ENCODE measurements at regions of chr6 and their contacts with region 1.

Region 1: DNA sequence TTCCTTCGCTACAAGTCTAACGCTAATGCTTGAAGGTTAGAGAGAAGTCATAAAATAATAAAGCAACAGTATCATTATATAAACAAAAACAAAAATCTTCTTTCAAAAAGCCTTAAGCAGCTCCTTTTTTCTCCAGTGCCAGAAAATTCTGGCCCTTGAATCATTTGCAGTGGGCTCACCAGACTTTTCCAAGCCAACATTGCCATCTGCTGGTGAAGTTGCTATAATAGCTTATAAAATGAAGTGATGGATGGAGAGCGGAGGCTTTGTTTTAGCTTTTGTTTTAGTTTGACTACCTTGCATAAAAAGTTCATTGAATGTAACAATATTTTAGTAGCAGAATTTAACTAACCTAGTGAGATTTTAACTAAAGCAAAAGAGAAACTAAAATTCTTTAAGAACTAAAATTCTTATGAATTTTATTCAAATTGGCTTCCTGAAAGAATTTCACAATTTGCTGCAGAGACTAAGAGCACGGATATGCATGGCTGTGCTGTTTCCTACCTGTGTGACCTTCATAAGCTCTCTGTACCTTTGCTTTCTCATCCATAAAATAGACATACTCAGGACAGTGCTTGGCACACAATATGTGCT is 44.8 kb upstream of the SLC2A12 start:
- DNase-seq: no peak
- H3K4me3 ChIP-seq: no peak overlapping the region
- H3K27ac ChIP-seq: no peak overlapping the region
- H3K4me1 ChIP-seq: no peaks in the 10 kb centered on the region
- H3K27me3 ChIP-seq: peaks cover 0 to 7% (median 0%) of the 10 kb centered on the region in 4 donors
- CTCF ChIP-seq: peak; percentile 54 to 75 (median 69)
- POLR2A ChIP-seq: no peak

Region 2: DNA sequence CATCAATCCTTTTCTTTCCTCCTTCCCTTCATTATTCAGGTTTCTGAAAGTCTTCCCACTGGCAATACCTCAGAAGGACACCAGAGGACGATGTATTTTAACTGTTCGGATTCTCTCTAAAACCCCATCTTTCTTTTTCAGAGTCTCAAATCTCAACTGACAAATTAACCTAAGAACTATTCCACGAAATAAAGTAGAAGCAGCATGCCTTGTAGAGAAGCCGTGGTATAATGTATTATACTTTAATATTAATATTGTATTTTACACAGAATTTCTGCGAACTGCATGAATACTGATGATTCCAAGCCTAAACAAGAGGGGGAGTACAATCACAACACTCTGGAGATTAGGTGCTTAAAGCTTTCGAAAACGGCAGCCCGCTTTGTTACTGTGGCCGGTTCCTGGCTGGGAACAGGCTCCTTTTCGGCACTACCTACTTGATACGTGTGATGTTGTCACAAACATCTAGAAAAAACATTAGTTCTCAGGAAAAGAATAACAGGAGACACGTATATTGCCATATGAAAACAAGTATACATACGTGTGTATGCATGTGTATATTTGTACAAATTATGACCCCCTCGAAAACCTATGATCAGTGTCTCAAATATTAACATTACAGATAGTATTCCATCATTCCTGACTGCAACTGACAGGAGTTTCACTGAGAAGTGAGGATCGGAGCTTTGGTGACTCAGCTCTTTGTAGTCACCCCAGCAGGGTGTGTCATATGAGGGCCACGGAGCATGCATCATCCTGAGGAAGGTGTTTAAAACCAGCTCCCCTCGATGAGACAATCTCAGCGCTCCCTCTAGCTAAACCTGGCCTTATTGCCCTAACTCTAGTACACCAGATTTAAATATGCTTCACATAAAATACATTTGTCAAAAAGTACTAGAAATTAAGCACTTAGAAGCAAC is 528.0 kb before region 1 on chr6:
- intact Hi-C with region 1: loop called (anchors 10 kb)
- DNase-seq: no peak
- H3K4me3 ChIP-seq: peak overlapping the region; percentile 17 to 61 (median 34)
- H3K27ac ChIP-seq: peak overlapping the region; percentile 38 to 64 (median 62)
- H3K4me1 ChIP-seq: peaks cover 0 to 15% (median 0%) of the 10 kb centered on the region in 3 donors
- H3K27me3 ChIP-seq: no peaks in the 10 kb centered on the region
- CTCF ChIP-seq: peak; percentile 36 to 95 (median 90)
- POLR2A ChIP-seq: no peak

Region 3: DNA sequence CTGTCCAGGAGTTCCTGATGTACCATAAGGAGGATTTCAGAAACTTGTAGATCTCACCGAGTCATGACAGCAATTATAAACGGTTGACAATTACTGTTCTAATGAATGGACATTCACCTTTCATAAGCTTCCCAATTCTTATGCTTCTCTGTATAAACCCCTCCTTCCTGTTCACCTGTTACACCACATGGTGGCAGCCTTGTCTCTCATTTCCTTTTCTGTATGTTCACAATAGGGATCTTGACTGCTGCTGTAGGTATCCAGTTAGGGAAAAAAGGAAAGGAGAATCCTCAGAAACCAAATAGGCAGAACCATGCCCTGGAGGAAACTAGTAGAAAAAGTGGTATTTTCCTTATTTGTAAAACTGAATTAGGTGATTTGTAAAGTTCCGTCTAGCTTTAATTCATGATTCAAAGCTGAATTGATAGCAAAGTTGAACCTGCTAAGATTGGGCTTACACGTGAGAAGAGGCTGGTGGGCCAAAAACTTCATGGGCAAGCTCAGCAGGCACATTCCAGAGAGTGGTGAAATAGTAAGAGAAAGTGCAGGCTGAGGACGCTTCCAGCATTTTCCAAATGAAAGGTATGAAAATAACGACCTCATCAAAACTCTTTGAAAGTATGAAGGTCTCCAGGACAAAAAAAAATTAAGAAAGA is 173.1 kb before region 1 on chr6:
- intact Hi-C with region 1: loop called (anchors 5 kb)
- DNase-seq: no peak
- H3K4me3 ChIP-seq: no peak overlapping the region
- H3K27ac ChIP-seq: no peak overlapping the region
- H3K4me1 ChIP-seq: peaks cover 0 to 8% (median 0%) of the 10 kb centered on the region in 3 donors
- H3K27me3 ChIP-seq: peaks cover 0 to 18% (median 0%) of the 10 kb centered on the region in 4 donors
- CTCF ChIP-seq: peak; percentile 70 to 91 (median 82)
- POLR2A ChIP-seq: no peak